Activated CD8-positive, alpha-beta T cell treated with anti-CD3 and anti-CD28 coated beads for 36 hours (primary cell): ENCODE measurements at regions of chr1 and their contacts with region 1.

Region 1: GRCh38 chr1:177558372-177558771 is 387.6 kb downstream of the BRINP2 start:
- DNase-seq: no peak
- ATAC-seq: no peak
- H3K4me3 Mint-ChIP-seq: no peak overlapping the region
- H3K27ac Mint-ChIP-seq: no peak overlapping the region
- H3K4me1 Mint-ChIP-seq: no peaks in the 10 kb centered on the region
- H3K27me3 Mint-ChIP-seq: no peaks in the 10 kb centered on the region
- CTCF ChIP-seq: no peak

Region 2: GRCh38 chr1:177505905-177506590 is 52.3 kb before region 1 on chr1:
- CTCF ChIA-PET with region 1: no interaction called
- POLR2A ChIA-PET with region 1: no interaction called
- intact Hi-C with region 1: no loop called
- DNase-seq: no peak
- ATAC-seq: no peak
- H3K4me3 Mint-ChIP-seq: no peak overlapping the region
- H3K27ac Mint-ChIP-seq: no peak overlapping the region
- H3K4me1 Mint-ChIP-seq: no peaks in the 10 kb centered on the region
- H3K27me3 Mint-ChIP-seq: no peaks in the 10 kb centered on the region
- CTCF ChIP-seq: no peak

Region 3: DNA sequence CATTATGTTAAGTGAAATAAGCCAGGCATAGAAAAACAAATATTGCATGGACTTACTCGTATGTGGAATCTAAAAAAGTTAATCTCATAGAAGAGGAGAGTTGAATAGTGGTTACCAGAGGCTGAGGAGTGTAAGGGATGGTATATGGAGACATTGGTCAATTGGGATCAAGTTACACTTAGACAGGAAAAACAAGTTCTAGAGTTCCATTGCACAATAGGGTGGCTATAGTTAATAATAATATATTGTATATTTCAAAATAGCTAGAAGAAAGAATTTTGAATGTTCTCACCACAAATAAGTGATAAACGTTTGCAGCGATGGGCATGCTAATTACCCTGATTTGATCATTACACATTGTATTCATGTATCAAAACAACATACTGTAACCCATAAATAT is 56.9 kb after region 1 on chr1:
- CTCF ChIA-PET with region 1: no interaction called
- POLR2A ChIA-PET with region 1: no interaction called
- intact Hi-C with region 1: loop called (anchors 10 kb)
- DNase-seq: no peak
- ATAC-seq: no peak
- H3K4me3 Mint-ChIP-seq: no peak overlapping the region
- H3K27ac Mint-ChIP-seq: no peak overlapping the region
- H3K4me1 Mint-ChIP-seq: no peaks in the 10 kb centered on the region
- H3K27me3 Mint-ChIP-seq: no peaks in the 10 kb centered on the region
- CTCF ChIP-seq: no peak